HepG2 (cell line): ENCODE measurements at regions of chr10 and their contacts with region 1.

Region 1: DNA sequence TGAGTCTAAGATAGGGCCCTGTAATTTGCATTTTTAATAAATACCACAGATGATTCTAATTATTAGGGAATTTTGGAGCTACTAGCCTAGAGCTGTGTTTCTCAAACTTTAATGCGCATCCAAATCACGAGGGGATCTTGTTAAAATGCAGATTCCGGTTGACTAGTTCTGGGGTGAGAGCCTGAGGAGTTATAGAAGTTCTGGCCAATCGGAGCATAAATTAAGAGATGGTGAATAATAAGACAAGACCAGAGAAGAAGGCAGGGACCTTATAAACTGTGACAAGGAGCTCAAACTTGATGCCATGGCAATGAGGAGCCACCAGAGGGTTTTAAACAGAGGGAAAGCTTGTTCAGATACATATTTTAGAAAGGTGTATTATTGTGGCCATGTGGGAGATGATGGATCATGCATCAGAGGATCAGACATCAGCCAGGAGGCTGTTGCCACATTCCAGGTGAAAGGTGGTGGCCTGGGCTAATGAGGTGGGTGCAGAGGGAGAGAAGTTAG is 29.7 kb upstream of the TLX1 start:
- DNase-seq: no peak
- ATAC-seq: no peak
- H3K4me3 ChIP-seq: no peak overlapping the region
- H3K27ac ChIP-seq: no peak overlapping the region
- H3K4me1 ChIP-seq: no peaks in the 10 kb centered on the region
- H3K27me3 ChIP-seq: peaks cover 3 to 25% of the 10 kb centered on the region in 2 experiments; a peak in 4 of 5 replicates
- CTCF ChIP-seq: no peak
- EP300 ChIP-seq: no peak
- POLR2A ChIP-seq: no peak
- RAD21 ChIP-seq: no peak

Region 2: GRCh38 chr10:101112799-101113594 is 11.6 kb after region 1 on chr10:
- CTCF ChIA-PET with region 1: no interaction called
- POLR2A ChIA-PET with region 1: interaction called, 13 read pairs
- in situ Hi-C with region 1: no loop called
- intact Hi-C with region 1: no loop called
- DNase-seq: peak; percentile 85
- ATAC-seq: peak; percentile 89
- H3K4me3 ChIP-seq: peak overlapping the region in 1 of 3 experiments; percentile 48; a peak in 1 of 6 replicates
- H3K27ac ChIP-seq: peak overlapping the region; percentile 68
- H3K4me1 ChIP-seq: peaks cover 40% of the 10 kb centered on the region
- H3K27me3 ChIP-seq: peaks cover 0 to 12% of the 10 kb centered on the region in 2 experiments; a peak in 1 of 5 replicates
- CTCF ChIP-seq: no peak
- EP300 ChIP-seq: peak in 1 of 2 experiments; percentile 76; a peak in 2 of 4 replicates
- POLR2A ChIP-seq: no peak
- RAD21 ChIP-seq: no peak